Activated T-helper 2 cell treated with anti-CD3 and anti-CD28 coated beads, Interferon-gamma antibody, Interleukin-2, Interleukin-4, amounts not matched to agents 10 μg/mL and 5 μg/mL and 100 μg/mL, durations not matched to agents 14 hours and 24 hours and 36 hours (primary cell): ENCODE measurements at regions of chr5 and their contacts with region 1.

Region 1: DNA sequence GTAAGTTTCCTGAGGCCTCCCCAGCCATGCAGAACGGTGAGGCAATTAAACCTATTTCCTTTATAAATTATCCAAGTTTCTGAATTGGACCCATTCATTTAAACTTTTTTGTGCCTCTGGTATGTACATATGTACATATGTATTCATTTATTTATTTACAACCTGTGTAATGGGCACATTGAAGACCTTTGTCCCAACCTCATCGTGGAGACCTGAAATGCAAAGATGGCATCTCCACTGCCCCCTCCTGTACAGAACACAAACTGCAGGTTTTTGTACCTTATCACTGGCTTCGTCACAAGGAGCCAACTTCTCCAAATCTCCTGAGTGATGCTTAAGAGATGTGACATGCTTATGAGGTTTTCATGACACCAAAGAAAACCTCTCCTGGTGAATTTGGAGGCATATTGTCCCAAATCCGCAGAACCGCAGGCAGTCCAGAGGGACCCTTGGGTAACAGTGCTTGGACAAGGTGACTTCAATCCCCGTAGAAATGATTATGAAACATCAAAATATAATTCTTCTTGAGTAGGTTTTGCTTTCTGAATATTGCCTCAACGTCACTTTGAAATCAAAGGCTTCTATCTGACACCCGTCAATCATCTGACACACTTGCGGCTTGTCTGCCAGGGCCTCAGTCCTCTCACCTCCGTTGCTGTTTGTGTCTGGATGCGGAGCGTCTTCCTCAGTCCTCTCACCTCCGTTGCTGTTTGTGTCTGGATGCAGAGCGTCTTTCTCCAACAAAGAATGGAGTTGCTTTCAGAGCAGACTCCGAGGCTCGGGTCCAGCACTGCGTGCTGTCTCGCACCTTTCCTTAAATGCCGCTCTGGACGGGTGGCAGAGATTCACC is 135.0 kb upstream of the IRX4 start:
- DNase-seq: no peak
- H3K4me3 Mint-ChIP-seq: no peak overlapping the region
- H3K27ac Mint-ChIP-seq: no peak overlapping the region
- H3K4me1 Mint-ChIP-seq: no peaks in the 10 kb centered on the region
- H3K27me3 Mint-ChIP-seq: no peaks in the 10 kb centered on the region

Region 2: DNA sequence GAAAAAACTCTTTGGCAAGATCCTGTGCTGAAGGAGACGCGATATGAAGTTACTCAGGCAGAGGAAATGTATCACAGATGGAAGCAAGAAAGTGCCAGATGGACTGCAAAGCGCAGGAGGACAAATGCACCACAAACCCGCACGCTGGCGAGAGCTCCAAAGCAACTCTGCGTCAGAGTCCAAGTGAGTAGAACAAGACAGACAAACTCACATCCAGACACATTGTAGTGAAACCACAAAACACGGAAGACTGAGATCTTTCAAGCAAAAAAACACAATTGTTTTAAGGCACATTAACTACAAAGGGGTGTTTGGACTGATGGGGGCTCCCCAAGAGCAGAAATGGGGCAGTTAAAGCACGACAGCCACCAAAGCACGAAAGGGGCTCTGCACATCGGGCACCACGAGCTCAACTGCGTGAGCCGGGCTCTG is 1048.3 kb before region 1 on chr5:
- intact Hi-C with region 1: no loop called
- DNase-seq: no peak
- H3K4me3 Mint-ChIP-seq: peak overlapping the region; percentile 27
- H3K27ac Mint-ChIP-seq: no peak overlapping the region
- H3K4me1 Mint-ChIP-seq: peaks cover 29% of the 10 kb centered on the region
- H3K27me3 Mint-ChIP-seq: peaks cover 13% of the 10 kb centered on the region

Region 3: GRCh38 chr5:1737790-1738405 is 279.9 kb before region 1 on chr5:
- intact Hi-C with region 1: loop called (anchors 5 kb)
- DNase-seq: no peak
- H3K4me3 Mint-ChIP-seq: no peak overlapping the region
- H3K27ac Mint-ChIP-seq: no peak overlapping the region
- H3K4me1 Mint-ChIP-seq: no peaks in the 10 kb centered on the region
- H3K27me3 Mint-ChIP-seq: peaks cover 23% of the 10 kb centered on the region

Region 4: GRCh38 chr5:1763548-1763911 is 254.2 kb before region 1 on chr5:
- intact Hi-C with region 1: loop called (anchors 10 kb)
- DNase-seq: no peak
- H3K4me3 Mint-ChIP-seq: no peak overlapping the region
- H3K27ac Mint-ChIP-seq: no peak overlapping the region
- H3K4me1 Mint-ChIP-seq: no peaks in the 10 kb centered on the region
- H3K27me3 Mint-ChIP-seq: peaks cover 4% of the 10 kb centered on the region